ENCODE measurements at regions of chr5 and their contacts with region 1.

Region 1: GRCh38 chr5:42583322-42583721 is 160.1 kb downstream of the GHR start:
- DNase-seq: peak in 4 of 5 donors; percentile 34 to 62 (median 57)
- ATAC-seq: peak in 3 of 4 donors; percentile 21 to 50 (median 45)
- H3K4me3 ChIP-seq: no peak overlapping the region
- H3K27ac ChIP-seq: no peak overlapping the region
- H3K4me1 ChIP-seq: peaks cover 0 to 47% (median 22%) of the 10 kb centered on the region in 12 donors
- H3K27me3 ChIP-seq: no peaks in the 10 kb centered on the region
- CTCF ChIP-seq: peak; percentile 64 to 93 (median 80)
- POLR2A ChIP-seq: no peak

Region 2: DNA sequence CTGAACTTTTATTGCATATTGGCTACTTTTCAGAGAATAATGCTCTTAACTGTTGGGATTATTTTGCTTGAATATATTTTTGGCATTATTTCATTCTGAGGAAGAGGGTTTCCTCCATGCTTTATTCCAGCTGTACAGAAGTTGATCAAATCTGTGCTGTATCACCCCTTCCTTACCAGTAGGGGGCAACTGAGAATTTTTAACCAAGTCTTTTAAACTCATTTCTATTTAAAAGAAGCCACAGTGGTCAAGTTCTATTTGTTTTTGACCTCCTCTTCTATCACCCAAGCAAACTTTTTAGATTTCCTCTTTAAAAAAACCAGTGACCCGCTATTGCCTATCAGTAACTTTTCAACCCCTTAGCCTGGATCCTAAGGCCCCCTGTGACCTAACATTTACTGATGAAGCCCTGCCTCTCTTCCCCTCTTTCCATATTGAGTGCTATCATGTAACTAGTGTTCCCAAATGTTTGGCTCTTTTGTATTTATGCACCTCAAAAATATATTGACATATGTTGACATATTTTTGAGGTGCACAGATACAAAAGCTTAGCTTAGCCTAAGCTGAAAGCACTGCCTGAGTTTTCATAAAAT is 577.7 kb before region 1 on chr5:
- intact Hi-C with region 1: loop called in 1 of 10 experiments (anchors 5 kb)
- DNase-seq: no peak
- ATAC-seq: no peak
- H3K4me3 ChIP-seq: no peak overlapping the region
- H3K27ac ChIP-seq: no peak overlapping the region
- H3K4me1 ChIP-seq: no peaks in the 10 kb centered on the region
- H3K27me3 ChIP-seq: no peaks in the 10 kb centered on the region
- CTCF ChIP-seq: peak; percentile 49 to 77 (median 66)
- POLR2A ChIP-seq: no peak

Region 3: DNA sequence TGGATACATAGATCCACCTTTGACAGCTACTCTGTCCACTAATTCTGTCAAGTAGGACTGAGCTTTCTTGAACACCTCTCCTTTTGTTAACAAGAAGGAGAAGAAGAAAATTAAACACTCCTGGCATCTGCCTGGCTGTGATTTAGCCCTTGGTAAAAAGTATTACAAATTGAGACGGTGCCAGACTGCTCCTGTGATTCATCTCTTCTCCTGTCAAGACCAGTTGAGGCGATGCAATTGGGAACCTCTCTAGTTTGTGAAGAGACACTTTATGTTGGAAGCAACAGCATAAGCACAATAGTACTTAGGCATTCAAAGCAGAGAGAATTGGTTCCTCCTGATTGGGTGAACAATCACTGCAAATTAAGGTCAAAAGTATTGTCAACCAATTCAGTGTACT is 87.4 kb before region 1 on chr5:
- intact Hi-C with region 1: no loop called
- DNase-seq: no peak
- ATAC-seq: peak in 3 of 4 donors; percentile 47 to 69 (median 63)
- H3K4me3 ChIP-seq: no peak overlapping the region
- H3K27ac ChIP-seq: no peak overlapping the region
- H3K4me1 ChIP-seq: peaks cover 0 to 48% (median 16%) of the 10 kb centered on the region in 12 donors
- H3K27me3 ChIP-seq: no peaks in the 10 kb centered on the region
- CTCF ChIP-seq: no peak
- POLR2A ChIP-seq: no peak

Region 4: DNA sequence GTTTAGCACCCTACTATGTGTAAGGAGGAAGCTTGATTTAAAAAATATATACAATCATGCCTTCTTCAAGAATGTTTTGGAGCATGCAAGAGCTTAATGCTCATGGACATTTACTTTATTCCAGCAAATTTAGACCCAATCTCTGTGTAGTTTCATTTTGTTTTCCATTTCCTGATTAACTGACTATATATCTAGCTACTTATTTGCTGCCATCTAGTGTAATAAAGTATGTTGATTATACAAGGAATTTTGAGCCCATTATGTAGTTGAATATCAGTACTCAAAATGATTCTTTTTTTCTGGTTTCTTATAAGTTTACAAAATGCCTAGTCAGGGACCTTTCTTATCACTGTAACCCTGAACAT is 73.3 kb after region 1 on chr5:
- intact Hi-C with region 1: loop called in 2 of 10 experiments (anchors 5 to 10 kb)
- DNase-seq: no peak
- ATAC-seq: peak in 2 of 4 donors; percentile 49 to 64
- H3K4me3 ChIP-seq: peak overlapping the region in 8 of 12 donors; percentile 1 to 47 (median 26)
- H3K27ac ChIP-seq: no peak overlapping the region
- H3K4me1 ChIP-seq: peaks cover 0 to 29% (median 14%) of the 10 kb centered on the region in 12 donors
- H3K27me3 ChIP-seq: no peaks in the 10 kb centered on the region
- CTCF ChIP-seq: peak in 10 of 12 donors; percentile 10 to 63 (median 40)
- POLR2A ChIP-seq: no peak

Region 5: DNA sequence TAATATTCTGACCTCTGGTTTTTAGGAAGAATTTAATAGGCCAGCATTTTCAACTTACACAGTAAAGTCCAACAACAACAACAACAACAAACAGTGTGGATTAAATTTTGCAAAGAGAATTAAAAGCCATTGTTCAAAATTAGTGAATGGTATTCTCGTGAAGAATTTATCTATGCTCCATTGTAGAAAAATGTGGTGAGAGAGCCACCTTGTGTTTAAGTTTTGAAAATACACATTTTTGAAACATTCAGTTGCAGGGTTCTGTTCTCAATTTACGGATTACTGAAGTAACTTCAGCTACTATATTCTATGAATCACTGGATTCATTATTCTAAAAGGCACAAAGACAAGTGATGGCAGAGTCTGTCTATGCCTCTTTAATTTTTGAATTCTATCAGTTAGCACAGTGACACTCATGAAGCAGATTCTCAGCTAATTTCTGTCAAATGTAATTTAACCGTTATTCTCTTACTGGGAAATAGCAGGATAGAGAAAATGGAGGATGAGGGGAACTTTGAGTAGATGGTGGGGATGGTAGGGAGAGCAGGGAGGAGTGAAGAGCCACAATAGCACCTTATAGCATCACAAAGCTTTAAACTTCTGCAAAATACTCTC is 184.3 kb after region 1 on chr5:
- intact Hi-C with region 1: loop called in 1 of 10 experiments (anchors 10 kb)
- DNase-seq: no peak
- ATAC-seq: peak in 1 of 4 donors; percentile 52
- H3K4me3 ChIP-seq: no peak overlapping the region
- H3K27ac ChIP-seq: no peak overlapping the region
- H3K4me1 ChIP-seq: peaks cover 0 to 4% (median 0%) of the 10 kb centered on the region in 12 donors
- H3K27me3 ChIP-seq: no peaks in the 10 kb centered on the region
- CTCF ChIP-seq: peak; percentile 27 to 71 (median 58)
- POLR2A ChIP-seq: no peak

Measured in heart left ventricle (tissue), 16 donors.